ENCODE measurements at regions of chr1 and their contacts with region 1.

Region 1: DNA sequence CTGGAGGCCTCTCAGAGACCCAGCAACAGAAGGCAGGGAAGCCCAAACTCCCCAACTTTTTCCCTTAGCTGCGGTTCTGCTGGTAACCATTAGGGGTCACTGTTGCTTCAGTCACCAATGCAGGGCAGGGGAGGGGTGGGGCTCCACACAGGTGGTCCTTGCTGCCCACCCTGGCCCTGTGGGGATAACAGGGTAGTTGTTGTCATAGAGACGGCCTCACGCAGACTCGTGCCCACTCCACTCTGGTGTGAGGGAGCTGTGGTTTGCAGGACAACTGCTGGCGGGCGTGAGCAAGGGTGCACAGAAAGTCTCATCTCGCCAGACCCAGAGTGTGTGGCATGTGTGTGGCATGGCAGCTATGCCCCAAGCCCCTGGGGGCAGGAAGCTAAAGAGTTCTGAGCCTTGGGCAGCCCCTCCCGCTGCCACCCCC is 19.9 kb downstream of the INSRR start:
- DNase-seq: peak; percentile 67
- ATAC-seq: peak; percentile 83
- H3K4me3 Mint-ChIP-seq: no peak overlapping the region
- H3K27ac Mint-ChIP-seq: no peak overlapping the region
- H3K4me1 Mint-ChIP-seq: peaks cover 5% of the 10 kb centered on the region
- H3K27me3 Mint-ChIP-seq: peaks cover 61% of the 10 kb centered on the region
- CTCF ChIP-seq: peak; percentile 87

Region 2: GRCh38 chr1:156622581-156623297 is 216.3 kb before region 1 on chr1:
- CTCF ChIA-PET with region 1: no interaction called
- POLR2A ChIA-PET with region 1: no interaction called
- DNase-seq: no peak
- ATAC-seq: no peak
- H3K4me3 Mint-ChIP-seq: peak overlapping the region; percentile 38
- H3K27ac Mint-ChIP-seq: no peak overlapping the region
- H3K4me1 Mint-ChIP-seq: peaks cover 13% of the 10 kb centered on the region
- H3K27me3 Mint-ChIP-seq: peaks cover 82% of the 10 kb centered on the region
- CTCF ChIP-seq: no peak

Region 3: GRCh38 chr1:156705918-156706656 is 132.9 kb before region 1 on chr1:
- CTCF ChIA-PET with region 1: interaction called, 10 read pairs
- POLR2A ChIA-PET with region 1: no interaction called
- DNase-seq: peak; percentile 94
- ATAC-seq: peak; percentile 45
- H3K4me3 Mint-ChIP-seq: peak overlapping the region; percentile 84
- H3K27ac Mint-ChIP-seq: peak overlapping the region; percentile 96
- H3K4me1 Mint-ChIP-seq: peaks cover 62% of the 10 kb centered on the region
- H3K27me3 Mint-ChIP-seq: peaks cover 23% of the 10 kb centered on the region
- CTCF ChIP-seq: peak; percentile 96

Region 4: GRCh38 chr1:156740679-156741612 is 98.0 kb before region 1 on chr1 and contains the start of gene MRPL24:
- CTCF ChIA-PET with region 1: no interaction called
- POLR2A ChIA-PET with region 1: no interaction called
- DNase-seq: peak; percentile 98
- ATAC-seq: peak; percentile 86
- H3K4me3 Mint-ChIP-seq: peak within 1 kb of the TSS; percentile 90
- H3K27ac Mint-ChIP-seq: peak within 1 kb of the TSS; percentile 100
- H3K4me1 Mint-ChIP-seq: peaks cover 25% of the 10 kb centered on the region
- H3K27me3 Mint-ChIP-seq: no peaks in the 10 kb centered on the region
- CTCF ChIP-seq: no peak
- total RNA-seq, gene MRPL24: 35.1 to 37.4 TPM (median 35.2 TPM) in 3 replicates

Region 5: DNA sequence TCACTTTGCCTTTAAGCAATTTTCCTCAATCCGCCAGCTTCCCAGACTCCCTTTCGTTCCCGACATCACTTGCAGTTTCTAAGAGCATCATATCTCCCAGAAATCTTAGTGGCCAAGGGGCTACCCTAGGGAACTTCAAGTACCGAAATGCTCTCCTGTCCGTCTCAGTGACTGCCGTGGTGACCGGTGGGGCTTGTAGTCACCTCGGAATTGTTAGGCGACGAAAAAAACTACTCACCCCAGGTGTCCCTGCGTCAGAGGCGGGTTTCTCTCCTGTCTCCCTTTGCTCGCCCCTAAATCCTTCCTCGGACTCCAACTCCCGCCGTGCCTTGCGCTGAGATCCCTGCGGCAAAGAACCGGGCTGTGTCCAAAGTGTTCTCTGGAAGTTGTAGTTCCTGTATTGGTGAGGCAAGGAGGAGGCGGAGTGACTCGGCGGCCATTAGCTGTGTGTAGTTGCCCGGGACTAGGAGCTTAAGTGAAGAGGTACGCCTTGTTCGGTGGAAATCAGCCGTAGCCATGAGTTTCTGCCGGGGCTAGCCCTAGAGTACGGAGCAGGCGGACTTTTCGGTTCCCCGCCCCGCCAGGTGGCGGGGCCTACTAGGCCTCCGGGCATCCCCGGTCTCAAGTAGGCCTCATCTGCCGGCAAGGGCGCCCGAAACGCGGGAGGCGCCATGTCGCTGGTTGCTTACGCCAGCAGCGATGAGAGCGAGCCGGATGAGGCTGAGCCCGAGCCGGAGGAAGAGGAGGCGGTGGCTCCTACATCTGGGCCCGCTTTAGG is 71.7 kb before region 1 on chr1 and contains the start of gene PRCC:
- CTCF ChIA-PET with region 1: no interaction called
- POLR2A ChIA-PET with region 1: no interaction called
- DNase-seq: peak; percentile 98
- ATAC-seq: peak; percentile 96
- H3K4me3 Mint-ChIP-seq: no peak within 1 kb of the TSS
- H3K27ac Mint-ChIP-seq: peak within 1 kb of the TSS; percentile 28; the same call in 1 of the 2 replicates
- H3K4me1 Mint-ChIP-seq: peaks cover 34% of the 10 kb centered on the region
- H3K27me3 Mint-ChIP-seq: no peaks in the 10 kb centered on the region
- CTCF ChIP-seq: no peak
- total RNA-seq, gene PRCC: 97.4 to 98.5 TPM (median 98.0 TPM) in 3 replicates

Region 6: DNA sequence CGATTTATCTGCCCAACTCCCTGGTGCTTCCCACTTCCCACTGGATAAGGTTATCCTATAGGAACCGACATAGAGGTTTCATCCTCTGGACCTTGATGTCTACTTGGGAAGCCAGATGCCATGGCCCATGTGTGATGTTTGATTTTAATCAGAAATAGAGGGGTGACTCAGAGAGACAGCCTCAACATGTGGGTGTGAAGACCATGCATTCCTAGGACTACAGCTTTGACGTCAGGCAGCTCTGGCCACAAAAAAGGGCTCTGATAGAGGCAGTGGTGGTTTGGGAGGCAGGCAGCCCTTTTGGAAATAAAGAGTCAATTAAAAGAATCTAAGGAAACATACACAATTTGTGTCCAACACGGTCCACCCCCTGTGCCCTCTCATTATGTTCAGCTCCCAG is 17.2 kb before region 1 on chr1:
- CTCF ChIA-PET with region 1: interaction called, 24 read pairs
- POLR2A ChIA-PET with region 1: no interaction called
- DNase-seq: no peak
- ATAC-seq: no peak
- H3K4me3 Mint-ChIP-seq: no peak overlapping the region
- H3K27ac Mint-ChIP-seq: no peak overlapping the region
- H3K4me1 Mint-ChIP-seq: no peaks in the 10 kb centered on the region
- H3K27me3 Mint-ChIP-seq: peaks cover 59% of the 10 kb centered on the region
- CTCF ChIP-seq: no peak

Region 7: GRCh38 chr1:156876281-156876680 is 37.3 kb after region 1 on chr1:
- CTCF ChIA-PET with region 1: interaction called, 42 read pairs
- POLR2A ChIA-PET with region 1: no interaction called
- DNase-seq: peak; percentile 76
- ATAC-seq: peak; percentile 96
- H3K4me3 Mint-ChIP-seq: peak overlapping the region; percentile 13; the same call in 1 of the 2 replicates
- H3K27ac Mint-ChIP-seq: no peak overlapping the region
- H3K4me1 Mint-ChIP-seq: peaks cover 4% of the 10 kb centered on the region
- H3K27me3 Mint-ChIP-seq: peaks cover 32% of the 10 kb centered on the region
- CTCF ChIP-seq: 0 out of 2 replicates have a peak, but pooled peaks have one; percentile 17

Region 8: DNA sequence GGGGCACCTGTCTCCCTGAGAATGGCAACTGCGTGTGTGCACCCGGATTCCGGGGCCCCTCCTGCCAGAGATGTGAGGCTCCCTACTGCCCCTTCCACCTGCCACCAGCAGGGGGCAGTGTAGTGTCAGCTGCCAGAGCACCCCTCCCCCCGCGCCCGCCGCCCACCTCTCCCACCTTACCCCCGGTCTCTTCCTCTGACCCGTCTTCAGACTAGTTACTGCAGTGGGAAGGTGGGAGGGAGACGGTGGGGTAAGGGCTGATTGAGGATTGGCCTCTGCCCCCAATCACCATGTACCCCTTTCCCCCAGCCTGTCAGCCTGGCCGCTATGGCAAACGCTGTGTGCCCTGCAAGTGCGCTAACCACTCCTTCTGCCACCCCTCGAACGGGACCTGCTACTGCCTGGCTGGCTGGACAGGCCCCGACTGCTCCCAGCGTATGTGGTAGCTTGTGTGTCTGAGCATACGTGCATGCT is 71.3 kb after region 1 on chr1:
- CTCF ChIA-PET with region 1: interaction called, 17 read pairs
- POLR2A ChIA-PET with region 1: no interaction called
- DNase-seq: peak; percentile 82
- ATAC-seq: peak; percentile 71
- H3K4me3 Mint-ChIP-seq: peak overlapping the region; percentile 67
- H3K27ac Mint-ChIP-seq: no peak overlapping the region
- H3K4me1 Mint-ChIP-seq: peaks cover 17% of the 10 kb centered on the region
- H3K27me3 Mint-ChIP-seq: peaks cover 17% of the 10 kb centered on the region
- CTCF ChIP-seq: peak; percentile 98

Measured in WTC11 (cell line).